ENCODE measurements at regions of chr7 and their contacts with region 1.

Region 1: DNA sequence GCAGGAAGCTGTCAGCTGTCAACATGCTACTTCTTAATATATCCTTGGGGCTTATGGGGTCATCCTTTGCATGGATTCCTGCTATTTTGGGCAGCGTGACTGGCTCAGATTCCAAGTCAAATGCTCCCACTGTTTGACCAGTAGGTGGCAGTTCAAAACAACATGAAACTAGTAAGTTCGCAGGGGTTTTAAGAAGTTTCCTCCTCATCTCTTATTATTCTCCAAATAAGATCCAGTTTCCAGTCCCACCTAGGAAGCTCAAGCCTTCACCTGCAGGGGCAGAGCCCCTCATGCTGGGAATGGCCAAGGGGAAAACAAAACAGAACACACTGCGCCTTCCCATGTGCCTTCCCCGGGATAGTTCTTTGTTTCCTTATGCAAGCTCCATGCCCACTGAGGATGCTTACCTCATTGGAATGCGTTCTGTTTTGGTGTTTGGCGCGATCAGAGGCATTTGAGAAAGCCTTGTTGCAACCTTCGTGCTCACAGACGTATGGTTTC is 259.8 kb downstream of the GLI3 start:
- DNase-seq: peak; percentile 43
- H3K4me3 ChIP-seq: peak overlapping the region in 1 of 2 experiments; percentile 7; a peak in 1 of 4 replicates
- H3K27ac ChIP-seq: no peak overlapping the region
- H3K4me1 ChIP-seq: no peaks in the 10 kb centered on the region
- H3K27me3 ChIP-seq: peaks cover 29% of the 10 kb centered on the region
- CTCF ChIP-seq: peak; percentile 98
- EP300 ChIP-seq: no peak
- RAD21 ChIP-seq: peak; percentile 75

Region 2: DNA sequence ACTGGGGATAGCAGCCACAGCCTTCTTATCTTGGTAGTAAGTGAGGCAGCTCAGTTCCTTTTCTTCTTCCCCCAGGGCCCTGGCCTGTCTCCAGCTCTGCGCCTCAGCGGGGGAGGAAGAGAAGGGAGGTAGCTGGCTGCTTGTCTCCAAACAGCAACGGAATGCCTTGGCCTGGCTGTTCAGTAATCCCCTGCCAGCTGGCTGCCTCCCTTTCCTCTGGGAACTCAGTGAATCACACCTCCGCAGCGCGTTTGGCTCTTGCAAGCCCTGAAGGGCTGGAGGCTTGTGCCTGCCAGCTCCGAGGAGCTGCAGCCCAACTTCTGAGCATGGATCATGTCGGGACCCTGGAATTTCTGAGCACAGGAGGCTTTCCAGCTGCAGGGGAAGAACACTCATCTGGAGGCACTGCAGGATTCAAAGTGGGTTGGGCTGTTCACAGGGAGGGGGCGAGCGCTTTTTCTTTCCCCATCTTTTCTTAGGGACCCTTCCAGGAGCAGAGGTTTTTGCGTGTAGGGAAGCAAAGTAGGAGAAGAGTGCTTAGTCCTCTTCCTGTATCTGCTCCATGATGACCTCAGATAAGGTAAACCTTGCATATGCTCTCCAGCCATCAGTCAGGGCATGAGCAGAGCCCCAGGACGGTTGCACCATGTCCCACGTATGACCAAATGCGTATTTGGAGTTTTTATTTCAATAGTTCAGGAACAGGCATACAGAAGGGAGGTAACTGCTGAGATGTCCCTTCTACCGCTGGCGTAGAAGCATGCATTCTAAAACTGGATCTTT is 21.1 kb before region 1 on chr7:
- CTCF ChIA-PET with region 1: interaction called, 16 read pairs
- POLR2A ChIA-PET with region 1: no interaction called
- DNase-seq: no peak
- H3K4me3 ChIP-seq: no peak overlapping the region; a peak in 1 of 4 replicates
- H3K27ac ChIP-seq: peak overlapping the region in 1 of 2 experiments; percentile 50; a peak in 2 of 4 replicates
- H3K4me1 ChIP-seq: peaks cover 0 to 21% of the 10 kb centered on the region in 2 experiments
- H3K27me3 ChIP-seq: peaks cover 7% of the 10 kb centered on the region; the same call in 1 of the 2 replicates
- CTCF ChIP-seq: no peak
- EP300 ChIP-seq: peak in 1 of 2 experiments; percentile 90; a peak in 2 of 4 replicates
- RAD21 ChIP-seq: no peak

Region 3: DNA sequence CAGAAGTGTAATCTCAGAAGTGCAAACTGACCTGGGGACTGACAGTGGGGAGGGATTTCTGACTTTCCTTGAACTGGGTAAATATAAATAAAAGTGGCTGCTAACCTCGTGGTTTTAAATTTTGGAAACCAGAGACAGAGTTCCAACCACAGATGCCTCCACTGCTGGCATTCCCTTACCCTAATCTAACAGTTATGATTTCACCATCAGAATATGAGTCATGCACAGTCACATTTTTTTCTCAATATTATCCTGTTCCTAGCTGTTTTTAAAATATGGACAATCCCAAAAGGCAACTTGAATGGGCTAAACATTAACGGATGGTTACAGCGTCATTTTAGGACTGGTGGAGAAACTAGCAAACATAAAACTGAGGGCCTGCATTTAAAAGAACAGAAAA is 10.0 kb before region 1 on chr7:
- CTCF ChIA-PET with region 1: interaction called, 51 read pairs
- POLR2A ChIA-PET with region 1: no interaction called
- DNase-seq: no peak
- H3K4me3 ChIP-seq: no peak overlapping the region
- H3K27ac ChIP-seq: no peak overlapping the region
- H3K4me1 ChIP-seq: no peaks in the 10 kb centered on the region
- H3K27me3 ChIP-seq: peaks cover 37% of the 10 kb centered on the region
- CTCF ChIP-seq: no peak
- EP300 ChIP-seq: no peak
- RAD21 ChIP-seq: no peak